ENCODE measurements at regions of chr20 and their contacts with region 1.

Region 1: DNA sequence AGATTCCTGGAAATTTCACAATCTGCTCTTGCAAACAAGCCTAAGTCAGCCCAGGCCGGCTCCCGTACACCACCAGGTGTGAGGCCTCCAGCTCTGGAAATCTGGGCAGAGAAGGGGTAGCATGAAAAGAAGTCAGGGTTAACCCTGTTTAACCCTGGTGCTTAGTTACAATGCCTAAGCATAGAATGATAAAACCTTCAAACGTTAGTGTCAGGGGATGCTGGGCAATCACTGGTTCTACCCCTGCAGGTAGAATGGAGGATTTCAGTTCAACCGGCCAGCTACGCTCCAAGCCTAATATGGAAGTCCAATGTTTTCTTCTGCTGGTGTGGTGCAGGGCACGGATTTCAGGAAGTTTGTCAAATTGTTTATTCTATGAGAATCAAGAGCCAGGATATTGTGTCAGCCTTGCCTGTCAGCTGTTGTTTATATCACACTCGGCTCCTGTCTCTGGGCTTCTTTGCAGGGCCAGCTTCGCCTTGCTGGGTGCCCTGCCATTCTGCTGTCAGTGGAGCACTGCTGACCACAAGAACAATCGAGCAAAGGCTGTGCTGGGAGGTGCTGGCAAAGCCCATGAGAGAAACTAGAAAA is 20.2 kb upstream of the CD93 start:
- DNase-seq: no peak
- H3K4me3 ChIP-seq: no peak overlapping the region
- H3K27ac ChIP-seq: no peak overlapping the region
- H3K4me1 ChIP-seq: no peaks in the 10 kb centered on the region
- H3K27me3 ChIP-seq: no peaks in the 10 kb centered on the region
- CTCF ChIP-seq: peak in 1 of 3 experiments; percentile 17; a peak in 1 of 4 replicates
- EP300 ChIP-seq: no peak
- POLR2A ChIP-seq: no peak
- RAD21 ChIP-seq: no peak

Region 2: GRCh38 chr20:23079016-23079351 is 27.4 kb before region 1 on chr20:
- CTCF ChIA-PET with region 1: no interaction called
- POLR2A ChIA-PET with region 1: no interaction called
- DNase-seq: peak; percentile 19 to 70
- H3K4me3 ChIP-seq: no peak overlapping the region
- H3K27ac ChIP-seq: no peak overlapping the region
- H3K4me1 ChIP-seq: peaks cover 0 to 7% (median 0%) of the 10 kb centered on the region in 4 experiments; a peak in 1 of 7 replicates
- H3K27me3 ChIP-seq: no peaks in the 10 kb centered on the region
- CTCF ChIP-seq: peak; percentile 68 to 90 (median 88)
- EP300 ChIP-seq: no peak
- POLR2A ChIP-seq: no peak
- RAD21 ChIP-seq: peak; percentile 52 to 63

Region 3: GRCh38 chr20:23092384-23092756 is 14.0 kb before region 1 on chr20:
- CTCF ChIA-PET with region 1: interaction called, 21 read pairs
- POLR2A ChIA-PET with region 1: interaction called, 3 read pairs
- DNase-seq: no peak
- H3K4me3 ChIP-seq: no peak overlapping the region
- H3K27ac ChIP-seq: no peak overlapping the region
- H3K4me1 ChIP-seq: peaks cover 0 to 4% (median 2%) of the 10 kb centered on the region in 4 experiments; a peak in 3 of 7 replicates
- H3K27me3 ChIP-seq: no peaks in the 10 kb centered on the region
- CTCF ChIP-seq: no peak
- EP300 ChIP-seq: no peak
- POLR2A ChIP-seq: no peak
- RAD21 ChIP-seq: no peak

Region 4: GRCh38 chr20:23116311-23117089 is 10.1 kb after region 1 on chr20:
- CTCF ChIA-PET with region 1: interaction called, 14 read pairs
- POLR2A ChIA-PET with region 1: interaction called, 3 read pairs
- DNase-seq: no peak
- H3K4me3 ChIP-seq: no peak overlapping the region
- H3K27ac ChIP-seq: no peak overlapping the region
- H3K4me1 ChIP-seq: no peaks in the 10 kb centered on the region; a peak in 1 of 7 replicates
- H3K27me3 ChIP-seq: no peaks in the 10 kb centered on the region
- CTCF ChIP-seq: no peak
- EP300 ChIP-seq: no peak
- POLR2A ChIP-seq: no peak
- RAD21 ChIP-seq: no peak

Region 5: GRCh38 chr20:23214903-23215302 is 108.5 kb after region 1 on chr20:
- CTCF ChIA-PET with region 1: no interaction called
- POLR2A ChIA-PET with region 1: no interaction called
- DNase-seq: no peak
- H3K4me3 ChIP-seq: no peak overlapping the region
- H3K27ac ChIP-seq: no peak overlapping the region
- H3K4me1 ChIP-seq: no peaks in the 10 kb centered on the region
- H3K27me3 ChIP-seq: peaks cover 0 to 2% (median 0%) of the 10 kb centered on the region in 4 experiments; a peak in 1 of 7 replicates
- CTCF ChIP-seq: no peak
- EP300 ChIP-seq: no peak
- POLR2A ChIP-seq: no peak
- RAD21 ChIP-seq: no peak